Tibial artery (tissue), 4 donors: ENCODE measurements at regions of chr6 and their contacts with region 1.

Region 1: GRCh38 chr6:135535989-135536414 is 38.5 kb upstream of the AHI1 start:
- DNase-seq: no peak
- H3K4me3 ChIP-seq: no peak overlapping the region
- H3K27ac ChIP-seq: no peak overlapping the region
- H3K4me1 ChIP-seq: peaks cover 0 to 10% (median 3%) of the 10 kb centered on the region in 4 donors
- H3K27me3 ChIP-seq: no peaks in the 10 kb centered on the region
- CTCF ChIP-seq: peak; percentile 57 to 61

Region 2: DNA sequence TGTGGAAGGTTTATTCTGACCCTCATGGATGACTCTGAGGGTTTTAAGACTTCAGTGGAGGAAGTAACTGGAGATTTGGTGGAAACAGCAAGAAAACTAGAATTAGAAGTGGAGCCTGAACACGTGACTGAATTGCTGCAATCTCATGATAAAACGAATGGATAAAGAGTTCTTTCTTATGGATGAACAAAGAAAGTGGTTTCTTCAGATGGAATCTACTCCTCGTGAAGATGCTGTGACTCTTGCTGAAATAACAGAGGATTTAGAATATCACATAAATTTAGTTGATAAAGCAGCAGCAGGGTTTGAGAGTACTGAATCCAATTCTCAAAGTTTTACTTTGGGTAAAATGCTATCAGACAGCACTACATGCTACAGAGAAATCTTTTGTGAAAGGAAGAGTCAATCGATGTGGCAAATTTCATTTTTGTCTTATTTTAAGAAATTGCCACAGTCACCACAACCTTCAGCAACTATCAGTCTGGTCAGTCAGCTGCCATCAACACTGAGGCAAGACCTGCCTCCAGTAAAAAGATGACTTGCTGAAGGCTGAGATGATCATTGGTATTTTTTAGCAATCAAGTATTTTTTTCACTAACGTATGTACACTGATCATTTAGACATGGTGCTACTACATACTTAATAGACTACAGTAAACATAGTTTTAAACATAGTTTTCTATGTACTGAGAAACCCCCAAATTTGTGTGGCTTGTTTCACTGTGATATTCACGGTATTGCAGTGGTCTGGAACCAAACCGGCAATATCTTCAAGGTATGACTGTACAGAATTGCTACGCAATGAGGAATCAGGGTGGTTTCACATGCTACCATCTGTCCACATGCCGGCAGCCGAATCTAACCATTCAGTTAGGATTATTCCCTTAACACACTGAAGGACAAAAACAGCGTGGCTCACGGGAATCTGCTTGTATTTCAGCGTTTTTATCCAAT is 205.9 kb before region 1 on chr6:
- intact Hi-C with region 1: no loop called
- DNase-seq: no peak
- H3K4me3 ChIP-seq: no peak overlapping the region
- H3K27ac ChIP-seq: no peak overlapping the region
- H3K4me1 ChIP-seq: no peaks in the 10 kb centered on the region
- H3K27me3 ChIP-seq: no peaks in the 10 kb centered on the region
- CTCF ChIP-seq: no peak

Region 3: GRCh38 chr6:135465307-135465706 is 70.7 kb before region 1 on chr6:
- intact Hi-C with region 1: no loop called
- DNase-seq: no peak
- H3K4me3 ChIP-seq: no peak overlapping the region
- H3K27ac ChIP-seq: no peak overlapping the region
- H3K4me1 ChIP-seq: no peaks in the 10 kb centered on the region
- H3K27me3 ChIP-seq: no peaks in the 10 kb centered on the region
- CTCF ChIP-seq: no peak

Region 4: GRCh38 chr6:135568366-135568765 is 32.4 kb after region 1 on chr6:
- intact Hi-C with region 1: no loop called
- DNase-seq: no peak
- H3K4me3 ChIP-seq: no peak overlapping the region
- H3K27ac ChIP-seq: no peak overlapping the region
- H3K4me1 ChIP-seq: peaks cover 0 to 6% (median 0%) of the 10 kb centered on the region in 4 donors
- H3K27me3 ChIP-seq: no peaks in the 10 kb centered on the region
- CTCF ChIP-seq: no peak

Region 5: GRCh38 chr6:135941275-135942025 is 405.4 kb after region 1 on chr6:
- intact Hi-C with region 1: loop called (anchors 10 kb)
- DNase-seq: no peak
- H3K4me3 ChIP-seq: no peak overlapping the region
- H3K27ac ChIP-seq: no peak overlapping the region
- H3K4me1 ChIP-seq: peaks cover 0 to 33% (median 7%) of the 10 kb centered on the region in 4 donors
- H3K27me3 ChIP-seq: no peaks in the 10 kb centered on the region
- CTCF ChIP-seq: no peak

Region 6: GRCh38 chr6:136226027-136226673 is 690.1 kb after region 1 on chr6:
- intact Hi-C with region 1: loop called (anchors 10 kb)
- DNase-seq: peak in 1 of 2 donors; percentile 48
- H3K4me3 ChIP-seq: peak overlapping the region in 1 of 2 donors; percentile 37
- H3K27ac ChIP-seq: no peak overlapping the region
- H3K4me1 ChIP-seq: peaks cover 0 to 5% (median 0%) of the 10 kb centered on the region in 4 donors
- H3K27me3 ChIP-seq: no peaks in the 10 kb centered on the region
- CTCF ChIP-seq: peak; percentile 98 to 100